SK-N-SH (cell line): ENCODE measurements at regions of chr3 and their contacts with region 1.

Region 1: GRCh38 chr3:114351123-114351821 is 57.4 kb downstream of the TIGIT start:
- DNase-seq: no peak
- H3K4me3 ChIP-seq: no peak overlapping the region
- H3K27ac ChIP-seq: no peak overlapping the region
- H3K4me1 ChIP-seq: no peaks in the 10 kb centered on the region
- H3K27me3 ChIP-seq: no peaks in the 10 kb centered on the region
- CTCF ChIP-seq: no peak
- EP300 ChIP-seq: no peak
- RAD21 ChIP-seq: no peak

Region 2: GRCh38 chr3:114362815-114363214 is 11.5 kb after region 1 on chr3:
- CTCF ChIA-PET with region 1: interaction called, 12 read pairs
- POLR2A ChIA-PET with region 1: no interaction called
- DNase-seq: peak; percentile 31
- H3K4me3 ChIP-seq: no peak overlapping the region
- H3K27ac ChIP-seq: 0 out of 4 replicates have a peak overlapping the region, but pooled peaks of 1 of the 2 experiments have one; percentile 58
- H3K4me1 ChIP-seq: peaks cover 0 to 11% of the 10 kb centered on the region in 2 experiments; a peak in 1 of 4 replicates
- H3K27me3 ChIP-seq: no peaks in the 10 kb centered on the region
- CTCF ChIP-seq: peak; percentile 66
- EP300 ChIP-seq: no peak
- RAD21 ChIP-seq: peak; percentile 68

Region 3: GRCh38 chr3:114374433-114374990 is 23.2 kb after region 1 on chr3:
- CTCF ChIA-PET with region 1: no interaction called
- POLR2A ChIA-PET with region 1: no interaction called
- DNase-seq: no peak
- H3K4me3 ChIP-seq: no peak overlapping the region
- H3K27ac ChIP-seq: no peak overlapping the region
- H3K4me1 ChIP-seq: peaks cover 0 to 6% of the 10 kb centered on the region in 2 experiments; a peak in 2 of 4 replicates
- H3K27me3 ChIP-seq: no peaks in the 10 kb centered on the region
- CTCF ChIP-seq: no peak
- EP300 ChIP-seq: no peak
- RAD21 ChIP-seq: no peak